ENCODE measurements at regions of chr4 and their contacts with region 1.

Region 1: DNA sequence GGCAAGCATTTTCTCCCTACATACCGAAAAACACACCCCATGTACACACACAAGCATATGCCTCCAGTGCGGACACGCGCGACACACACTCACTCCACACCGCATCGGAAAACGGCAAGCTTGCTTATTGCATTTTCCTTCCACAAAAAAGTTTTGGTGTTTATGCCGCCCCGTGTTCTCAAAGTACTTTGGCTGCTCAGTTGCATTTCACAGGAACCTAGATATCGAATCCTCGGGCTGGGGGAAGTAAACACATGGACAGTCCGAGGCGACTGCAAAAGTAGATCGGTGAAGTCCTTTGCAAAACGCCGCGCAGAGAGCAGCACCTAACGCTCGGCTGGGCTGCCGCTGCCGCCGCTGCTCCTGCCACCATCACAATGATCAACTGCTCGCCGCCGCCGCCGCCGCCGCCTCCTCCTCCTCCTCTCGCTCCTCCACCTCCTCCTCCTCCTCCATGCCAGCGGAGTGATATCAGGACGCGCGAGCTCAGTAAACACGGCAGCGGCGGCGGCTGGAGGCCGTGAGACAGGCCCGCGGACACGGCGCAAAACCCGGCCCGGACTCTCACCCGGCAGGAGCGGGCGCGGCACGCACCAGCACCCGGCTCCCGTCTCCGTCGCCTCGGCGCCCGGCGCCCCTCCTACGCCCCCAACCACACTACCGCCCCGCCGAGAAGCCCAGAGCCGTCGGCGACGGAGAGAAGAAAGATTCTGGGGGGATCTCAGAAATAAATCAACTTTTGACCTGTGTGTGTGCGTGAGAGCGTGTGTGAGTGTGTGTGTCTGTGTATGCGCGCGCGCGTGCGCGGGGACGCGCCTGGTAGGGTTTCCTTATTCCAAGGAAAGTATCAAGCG is at the start of gene MAML3:
- DNase-seq: peak; percentile 94 to 96 (median 96)
- H3K4me3 ChIP-seq: peak within 1 kb of the TSS; percentile 50
- H3K27ac ChIP-seq: peak within 1 kb of the TSS; percentile 96 to 99
- H3K4me1 ChIP-seq: peaks cover 10% of the 10 kb centered on the region
- H3K27me3 ChIP-seq: no peaks in the 10 kb centered on the region
- CTCF ChIP-seq: peak in 2 of 3 donors; percentile 11 to 51
- EP300 ChIP-seq: no peak
- POLR2A ChIP-seq: peak; percentile 78
- total RNA-seq, gene MAML3: 14.2 to 23.8 (median 17.0) TPM

Region 2: DNA sequence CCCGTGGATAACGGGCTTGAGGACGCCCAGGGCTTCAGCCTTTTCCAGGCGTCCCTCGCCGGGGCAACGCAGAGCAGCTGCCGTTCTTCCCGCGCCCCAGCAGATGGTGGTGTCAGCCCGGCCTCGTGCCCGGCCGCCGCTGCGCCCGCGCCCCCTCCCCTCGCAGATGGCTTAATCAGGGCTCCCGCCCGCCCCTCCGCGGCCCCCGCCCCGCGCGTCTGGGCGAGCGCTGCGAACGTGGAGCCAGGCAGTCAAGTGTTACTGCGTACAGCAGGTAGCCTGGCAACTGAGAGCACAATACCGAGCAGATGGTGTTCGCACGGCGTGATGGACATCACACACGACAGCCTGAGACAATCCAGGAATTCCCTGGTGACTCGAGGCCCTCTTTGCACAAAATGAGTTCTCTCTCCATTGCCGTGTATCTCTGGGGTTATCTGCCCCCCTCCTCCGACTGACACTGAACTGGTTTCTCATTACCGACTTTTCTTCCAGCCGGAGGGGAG is 419.0 kb before region 1 on chr4:
- intact Hi-C with region 1: loop called (anchors 2 to 5 kb)
- DNase-seq: peak; percentile 93 to 95 (median 95)
- H3K4me3 ChIP-seq: peak overlapping the region; percentile 37
- H3K27ac ChIP-seq: peak overlapping the region; percentile 80 to 83
- H3K4me1 ChIP-seq: peaks cover 10% of the 10 kb centered on the region
- H3K27me3 ChIP-seq: no peaks in the 10 kb centered on the region
- CTCF ChIP-seq: peak; percentile 81 to 89 (median 86)
- EP300 ChIP-seq: no peak
- POLR2A ChIP-seq: peak; percentile 51

Region 3: GRCh38 chr4:139901531-139902320 is 252.2 kb before region 1 on chr4:
- intact Hi-C with region 1: loop called in 1 of 4 experiments (anchors 10 kb)
- DNase-seq: no peak
- H3K4me3 ChIP-seq: peak overlapping the region; percentile 20
- H3K27ac ChIP-seq: peak overlapping the region in 1 of 2 donors; percentile 59
- H3K4me1 ChIP-seq: peaks cover 4% of the 10 kb centered on the region
- H3K27me3 ChIP-seq: no peaks in the 10 kb centered on the region
- CTCF ChIP-seq: no peak
- EP300 ChIP-seq: no peak
- POLR2A ChIP-seq: no peak

Region 4: DNA sequence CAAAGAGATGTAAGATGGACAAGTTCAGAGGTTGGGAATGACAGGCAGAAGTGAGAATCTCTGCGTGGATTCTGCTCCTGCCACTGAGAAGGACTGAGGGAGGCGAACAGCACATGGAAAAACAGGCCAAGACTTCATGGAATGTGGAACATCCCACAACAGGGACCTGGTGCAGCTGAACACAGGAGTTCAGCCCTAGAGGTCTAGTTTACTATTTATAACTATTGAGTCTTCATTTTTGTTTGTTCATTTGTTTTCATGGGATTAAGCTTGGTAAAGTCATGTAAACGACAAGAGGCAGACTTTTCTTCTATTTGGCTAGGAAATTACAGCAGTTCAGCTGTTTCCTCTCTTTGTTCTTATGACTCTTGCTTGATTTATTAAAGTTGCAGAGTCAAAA is 234.4 kb before region 1 on chr4:
- intact Hi-C with region 1: loop called in 2 of 4 experiments (anchors 5 to 10 kb)
- DNase-seq: no peak
- H3K4me3 ChIP-seq: no peak overlapping the region
- H3K27ac ChIP-seq: peak overlapping the region; percentile 23 to 83
- H3K4me1 ChIP-seq: peaks cover 34% of the 10 kb centered on the region
- H3K27me3 ChIP-seq: no peaks in the 10 kb centered on the region
- CTCF ChIP-seq: no peak
- EP300 ChIP-seq: no peak
- POLR2A ChIP-seq: no peak

Region 5: DNA sequence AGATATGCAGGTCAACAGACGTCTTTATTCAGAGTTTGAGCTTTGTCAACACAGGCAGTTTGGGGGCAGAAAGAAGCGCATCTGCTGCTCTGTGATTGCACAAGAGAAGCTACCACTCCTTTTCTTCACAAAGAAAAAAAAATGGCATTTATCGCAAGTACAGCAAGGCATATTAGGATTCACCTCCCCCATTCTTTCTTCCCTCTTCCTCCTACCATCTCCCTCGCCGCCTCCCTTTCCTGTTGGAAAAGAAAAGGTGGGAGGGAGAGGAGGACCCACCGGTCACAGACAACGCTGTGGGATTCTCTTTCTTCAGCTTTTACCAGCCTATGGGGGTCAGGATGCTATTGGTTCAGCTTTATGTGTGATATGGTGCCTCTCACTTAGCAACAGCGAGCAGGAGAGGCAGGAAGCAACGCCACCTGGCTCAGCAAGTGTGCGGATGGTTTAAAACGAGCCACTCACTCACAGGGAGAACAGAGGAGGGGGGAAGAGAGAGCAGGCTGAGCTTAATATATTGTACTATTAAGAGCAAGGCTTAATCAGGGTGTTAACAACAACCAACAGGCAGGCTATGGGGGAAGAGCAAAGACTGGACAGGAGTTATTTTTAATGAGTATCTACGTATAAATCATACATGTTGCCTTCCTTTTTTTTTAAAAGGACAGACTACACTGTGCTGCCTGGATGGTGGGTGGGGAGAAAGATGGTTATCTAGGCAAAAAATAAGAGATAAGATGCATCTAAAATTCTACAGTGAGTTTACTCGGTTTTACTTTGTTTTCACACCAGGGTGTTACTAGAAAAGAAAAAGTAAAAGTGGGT is 104.7 kb before region 1 on chr4:
- intact Hi-C with region 1: loop called in 3 of 4 experiments (anchors 5 to 10 kb)
- DNase-seq: peak; percentile 68 to 78 (median 68)
- H3K4me3 ChIP-seq: peak overlapping the region; percentile 17
- H3K27ac ChIP-seq: peak overlapping the region; percentile 62 to 85
- H3K4me1 ChIP-seq: peaks cover 5% of the 10 kb centered on the region
- H3K27me3 ChIP-seq: no peaks in the 10 kb centered on the region
- CTCF ChIP-seq: no peak
- EP300 ChIP-seq: no peak
- POLR2A ChIP-seq: no peak

Region 6: GRCh38 chr4:140237606-140237986 is 83.7 kb after region 1 on chr4:
- intact Hi-C with region 1: loop called in 2 of 4 experiments (anchors 5 kb)
- DNase-seq: peak; percentile 63 to 81 (median 71)
- H3K4me3 ChIP-seq: peak overlapping the region; percentile 1
- H3K27ac ChIP-seq: peak overlapping the region in 1 of 2 donors; percentile 91
- H3K4me1 ChIP-seq: peaks cover 7% of the 10 kb centered on the region
- H3K27me3 ChIP-seq: no peaks in the 10 kb centered on the region
- CTCF ChIP-seq: no peak
- EP300 ChIP-seq: no peak
- POLR2A ChIP-seq: no peak

Measured in ovary (tissue), 10 donors.